ENCODE measurements at regions of chr3 and their contacts with region 1.

Region 1: GRCh38 chr3:130111185-130111864 is 29.7 kb downstream of the ALG1L2 start:
- DNase-seq: peak; percentile 97 to 99 (median 99)
- H3K4me3 ChIP-seq: peak overlapping the region in 1 of 2 donors; percentile 73
- H3K4me3 Mint-ChIP-seq: peak overlapping the region; percentile 96 to 100 (median 98)
- H3K27ac ChIP-seq: peak overlapping the region; percentile 82
- H3K27ac Mint-ChIP-seq: peak overlapping the region; percentile 94 to 100 (median 100)
- H3K4me1 ChIP-seq: peaks cover 8% of the 10 kb centered on the region
- H3K4me1 Mint-ChIP-seq: peaks cover 10 to 27% (median 12%) of the 10 kb centered on the region in 4 donors
- H3K27me3 ChIP-seq: no peaks in the 10 kb centered on the region
- H3K27me3 Mint-ChIP-seq: no peaks in the 10 kb centered on the region

Region 2: GRCh38 chr3:129893581-129894070 is 217.7 kb before region 1 on chr3 and contains the start of gene TMCC1:
- CTCF ChIA-PET with region 1: no interaction called
- POLR2A ChIA-PET with region 1: no interaction called
- intact Hi-C with region 1: loop called (anchors 1 kb)
- DNase-seq: peak; percentile 90 to 94 (median 92)
- H3K4me3 ChIP-seq: peak within 1 kb of the TSS; percentile 87 to 96
- H3K4me3 Mint-ChIP-seq: peak within 1 kb of the TSS; percentile 88 to 96 (median 92)
- H3K27ac ChIP-seq: peak within 1 kb of the TSS; percentile 82
- H3K27ac Mint-ChIP-seq: peak within 1 kb of the TSS; percentile 92 to 97 (median 93)
- H3K4me1 ChIP-seq: peaks cover 46% of the 10 kb centered on the region
- H3K4me1 Mint-ChIP-seq: peaks cover 23 to 47% (median 37%) of the 10 kb centered on the region in 4 donors
- H3K27me3 ChIP-seq: no peaks in the 10 kb centered on the region
- H3K27me3 Mint-ChIP-seq: peaks cover 0 to 1% of the 10 kb centered on the region in 2 donors
- total RNA-seq, gene TMCC1: 36.4 to 39.3 TPM

Region 3: DNA sequence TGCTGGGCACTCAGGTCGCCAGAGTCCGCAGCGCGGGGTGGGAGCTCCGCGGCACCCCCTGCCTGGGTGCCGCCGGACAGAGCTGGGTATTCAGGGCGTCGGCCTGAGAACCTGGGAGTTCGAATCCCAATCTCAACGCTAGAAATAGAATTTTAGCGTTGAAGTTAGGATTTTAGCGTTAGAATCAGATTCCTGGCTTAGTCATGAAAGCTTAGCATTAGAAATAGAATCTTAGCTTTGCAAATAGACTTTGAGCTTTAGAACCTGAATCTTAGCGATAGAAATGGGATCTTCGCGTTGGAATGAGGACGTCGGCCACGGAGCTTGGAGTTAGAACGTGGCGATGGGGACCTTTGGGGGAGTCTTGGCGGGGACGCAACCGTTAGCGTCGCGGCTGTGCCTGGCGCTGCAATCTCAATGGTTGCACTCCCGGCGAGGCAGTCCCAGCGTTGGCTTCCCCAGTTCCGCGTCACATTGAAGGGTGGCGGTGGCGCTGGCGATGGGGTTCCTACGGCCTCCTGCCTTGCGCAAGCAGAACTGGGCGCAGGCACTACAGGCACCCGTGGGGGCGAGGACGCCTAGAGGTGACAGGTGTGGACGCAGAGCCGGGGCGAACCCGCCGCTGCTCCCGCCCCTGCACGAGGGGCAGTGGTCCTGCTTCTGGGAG is 136.2 kb before region 1 on chr3:
- CTCF ChIA-PET with region 1: no interaction called
- POLR2A ChIA-PET with region 1: no interaction called
- intact Hi-C with region 1: no loop called
- DNase-seq: peak in 3 of 5 donors; percentile 8 to 13 (median 13)
- H3K4me3 ChIP-seq: peak overlapping the region in 1 of 2 donors; percentile 28
- H3K4me3 Mint-ChIP-seq: peak overlapping the region; percentile 75 to 88 (median 82)
- H3K27ac ChIP-seq: no peak overlapping the region
- H3K27ac Mint-ChIP-seq: peak overlapping the region in 1 of 7 donors; percentile 11
- H3K4me1 ChIP-seq: peaks cover 8% of the 10 kb centered on the region
- H3K4me1 Mint-ChIP-seq: peaks cover 5 to 8% (median 6%) of the 10 kb centered on the region in 4 donors
- H3K27me3 ChIP-seq: peaks cover 8% of the 10 kb centered on the region
- H3K27me3 Mint-ChIP-seq: peaks cover 41 to 46% of the 10 kb centered on the region in 2 donors

Region 4: DNA sequence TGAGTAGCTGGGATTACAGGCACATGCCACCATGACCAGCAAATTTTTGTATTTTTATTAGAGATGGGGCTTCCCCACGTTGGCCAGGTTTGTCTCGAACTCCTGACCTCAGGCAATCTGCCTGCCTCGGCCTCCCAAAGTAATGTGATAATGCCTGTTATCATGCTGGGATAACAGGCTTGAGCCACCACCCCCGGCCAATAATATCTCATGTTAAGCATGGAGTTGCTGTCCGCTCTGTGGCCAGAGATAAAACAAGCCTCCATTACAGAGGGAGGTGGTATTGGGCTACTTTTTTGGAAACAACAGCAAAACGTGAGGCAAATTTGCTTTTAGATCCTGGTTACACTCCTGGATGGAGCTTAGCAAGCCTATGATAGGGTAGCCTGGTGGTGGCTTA is 62.6 kb before region 1 on chr3:
- CTCF ChIA-PET with region 1: no interaction called
- POLR2A ChIA-PET with region 1: no interaction called
- intact Hi-C with region 1: no loop called
- DNase-seq: no peak
- H3K4me3 ChIP-seq: no peak overlapping the region
- H3K4me3 Mint-ChIP-seq: no peak overlapping the region
- H3K27ac ChIP-seq: no peak overlapping the region
- H3K27ac Mint-ChIP-seq: no peak overlapping the region
- H3K4me1 ChIP-seq: no peaks in the 10 kb centered on the region
- H3K4me1 Mint-ChIP-seq: no peaks in the 10 kb centered on the region
- H3K27me3 ChIP-seq: no peaks in the 10 kb centered on the region
- H3K27me3 Mint-ChIP-seq: peaks cover 0 to 3% of the 10 kb centered on the region in 2 donors

Region 5: GRCh38 chr3:131381444-131382291 is 1270.3 kb after region 1 on chr3 and contains the start of gene NUDT16:
- CTCF ChIA-PET with region 1: no interaction called
- POLR2A ChIA-PET with region 1: no interaction called
- intact Hi-C with region 1: loop called (anchors 5 kb)
- DNase-seq: peak; percentile 92 to 96 (median 94)
- H3K4me3 ChIP-seq: peak within 1 kb of the TSS; percentile 89 to 95
- H3K4me3 Mint-ChIP-seq: peak within 1 kb of the TSS; percentile 96 to 98 (median 96)
- H3K27ac ChIP-seq: peak within 1 kb of the TSS; percentile 61
- H3K27ac Mint-ChIP-seq: peak within 1 kb of the TSS; percentile 90 to 99 (median 96)
- H3K4me1 ChIP-seq: peaks cover 28% of the 10 kb centered on the region
- H3K4me1 Mint-ChIP-seq: peaks cover 33 to 43% (median 38%) of the 10 kb centered on the region in 4 donors
- H3K27me3 ChIP-seq: no peaks in the 10 kb centered on the region
- H3K27me3 Mint-ChIP-seq: no peaks in the 10 kb centered on the region
- total RNA-seq, gene NUDT16: 15.6 to 16.7 TPM